AG04449 (cell line): ENCODE measurements at regions of chr1 and their contacts with region 1.

Region 1: GRCh38 chr1:21200767-21201166 is 24.1 kb upstream of the EIF4G3 start:
- DNase-seq: no peak
- H3K4me3 ChIP-seq: no peak overlapping the region
- CTCF ChIP-seq: no peak

Region 2: DNA sequence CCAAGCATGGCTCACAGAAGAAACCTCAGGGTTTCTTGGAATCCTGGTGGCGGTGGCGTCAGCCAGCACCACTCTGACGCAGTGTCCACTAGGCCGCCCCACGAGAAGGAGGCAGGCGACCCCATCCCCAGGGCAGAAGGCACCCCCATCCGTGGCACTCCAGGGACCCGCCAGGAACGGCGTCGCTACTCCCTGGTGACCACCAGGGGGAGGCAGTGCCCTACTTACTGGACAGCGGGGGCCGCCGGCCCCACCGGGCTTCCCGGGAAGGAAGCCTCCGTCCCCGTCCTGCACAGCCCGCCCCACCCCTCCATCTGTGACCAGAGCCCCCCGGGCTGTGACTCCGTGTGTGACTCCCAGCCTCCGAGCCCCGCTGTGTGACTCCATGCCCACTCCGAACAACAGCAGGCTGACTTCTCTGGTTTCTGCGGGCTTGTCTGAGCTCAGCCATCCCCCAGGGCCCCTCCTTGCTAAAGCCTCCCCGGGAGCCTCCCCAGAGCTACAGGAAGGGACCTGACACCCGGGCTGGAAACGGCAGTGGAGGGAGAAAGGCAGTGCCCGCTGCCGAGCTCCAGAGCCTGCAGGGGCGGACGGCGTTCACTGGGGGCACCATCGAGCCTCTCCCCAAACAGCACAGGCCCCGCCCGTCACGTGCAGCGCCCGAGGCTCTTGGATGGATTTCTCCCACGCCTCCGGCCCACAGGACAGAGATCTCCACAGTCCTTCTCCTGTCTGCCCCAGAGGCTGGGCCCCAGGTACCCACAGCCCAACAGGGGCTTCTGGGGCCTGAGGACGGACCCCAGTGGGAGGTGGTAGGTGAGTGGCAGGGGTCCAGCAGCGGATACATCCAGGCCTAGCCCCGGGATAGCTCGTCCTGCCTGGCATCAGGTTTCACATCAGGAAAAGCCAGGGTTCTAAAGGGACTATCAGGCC is 504.1 kb before region 1 on chr1:
- CTCF ChIA-PET with region 1: interaction called, 185 read pairs
- POLR2A ChIA-PET with region 1: interaction called, 5 read pairs
- DNase-seq: peak; percentile 70
- H3K4me3 ChIP-seq: peak overlapping the region; percentile 70
- CTCF ChIP-seq: peak; percentile 90

Region 3: DNA sequence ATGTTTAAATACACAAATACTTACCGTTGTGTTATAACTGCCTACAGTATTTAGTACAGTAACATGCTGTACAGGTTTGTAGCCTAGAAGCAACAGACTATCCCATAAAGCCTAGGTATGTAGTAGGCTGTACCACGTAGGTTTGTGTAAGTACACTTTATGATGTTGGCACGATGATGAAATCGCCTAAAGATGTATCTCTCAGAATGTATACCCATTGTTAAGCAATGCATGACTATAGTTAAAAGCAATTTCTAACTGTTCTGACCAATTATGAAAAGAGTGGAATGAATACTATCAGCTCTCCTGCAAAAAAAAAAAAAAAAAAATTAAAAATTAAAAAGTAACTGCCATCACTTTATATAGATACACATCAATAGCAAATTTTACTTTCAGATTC is 425.1 kb before region 1 on chr1:
- CTCF ChIA-PET with region 1: interaction called, 10 read pairs
- POLR2A ChIA-PET with region 1: no interaction called
- DNase-seq: no peak
- H3K4me3 ChIP-seq: no peak overlapping the region
- CTCF ChIP-seq: no peak

Region 4: GRCh38 chr1:20903437-20903836 is 297.3 kb before region 1 on chr1:
- CTCF ChIA-PET with region 1: interaction called, 13 read pairs
- POLR2A ChIA-PET with region 1: no interaction called
- DNase-seq: no peak
- H3K4me3 ChIP-seq: no peak overlapping the region
- CTCF ChIP-seq: no peak

Region 5: GRCh38 chr1:21037091-21037490 is 163.7 kb before region 1 on chr1:
- CTCF ChIA-PET with region 1: interaction called, 10 read pairs
- POLR2A ChIA-PET with region 1: no interaction called
- DNase-seq: no peak
- H3K4me3 ChIP-seq: no peak overlapping the region
- CTCF ChIP-seq: no peak

Region 6: DNA sequence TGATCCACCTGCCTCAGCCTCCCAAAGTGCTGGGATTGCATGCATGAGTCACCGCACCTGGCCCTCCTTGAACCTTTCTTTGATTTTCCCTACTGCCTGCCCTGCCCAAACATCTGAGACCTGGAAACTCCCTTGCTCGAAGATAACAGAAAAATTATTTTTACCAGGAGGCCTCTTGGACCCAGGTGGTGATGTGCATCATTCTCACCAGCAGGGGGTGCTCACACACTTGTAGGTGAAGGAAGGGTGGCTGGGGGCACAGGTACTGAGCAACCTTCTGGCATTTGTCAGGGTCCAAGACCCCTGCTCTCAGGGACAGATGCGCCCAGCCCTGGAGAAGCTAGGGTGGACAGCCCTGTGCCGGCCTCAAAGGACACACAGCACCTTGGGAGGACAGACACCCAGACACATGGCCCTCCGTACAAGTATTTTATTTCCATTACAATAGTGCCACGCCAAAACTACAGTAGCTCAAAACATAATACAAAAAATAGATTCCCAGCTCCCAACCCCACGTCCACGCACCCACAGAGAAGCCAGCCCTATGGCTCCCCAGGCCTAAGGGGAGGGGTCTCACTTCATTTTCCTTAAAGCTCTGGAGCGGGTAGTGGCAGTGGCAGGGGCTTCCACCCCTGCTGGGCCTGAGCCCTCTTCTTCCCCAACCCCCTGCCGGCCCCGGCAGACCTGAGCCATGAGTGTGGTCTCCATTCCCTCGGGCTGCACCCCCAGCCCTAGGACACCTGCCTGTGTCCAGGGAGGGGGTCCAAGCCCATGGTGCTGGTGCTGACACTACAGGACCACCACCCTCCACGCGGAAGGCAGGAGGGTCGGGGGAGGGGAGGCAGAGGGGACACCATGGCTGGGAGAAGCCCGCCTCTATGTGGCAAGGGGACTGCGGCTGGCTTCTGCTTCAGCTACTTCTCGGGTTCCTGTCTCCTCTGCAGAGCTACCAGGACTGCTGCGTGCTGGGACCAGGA is 16.4 kb after region 1 on chr1:
- CTCF ChIA-PET with region 1: interaction called, 38 read pairs
- POLR2A ChIA-PET with region 1: no interaction called
- DNase-seq: no peak
- H3K4me3 ChIP-seq: no peak overlapping the region
- CTCF ChIP-seq: peak; percentile 72

Region 7: GRCh38 chr1:21232044-21232443 is 31.3 kb after region 1 on chr1:
- CTCF ChIA-PET with region 1: no interaction called
- POLR2A ChIA-PET with region 1: no interaction called
- DNase-seq: no peak
- H3K4me3 ChIP-seq: no peak overlapping the region
- CTCF ChIP-seq: peak; percentile 55